HCT116 (cell line): ENCODE measurements at regions of chr14 and their contacts with region 1.

Region 1: DNA sequence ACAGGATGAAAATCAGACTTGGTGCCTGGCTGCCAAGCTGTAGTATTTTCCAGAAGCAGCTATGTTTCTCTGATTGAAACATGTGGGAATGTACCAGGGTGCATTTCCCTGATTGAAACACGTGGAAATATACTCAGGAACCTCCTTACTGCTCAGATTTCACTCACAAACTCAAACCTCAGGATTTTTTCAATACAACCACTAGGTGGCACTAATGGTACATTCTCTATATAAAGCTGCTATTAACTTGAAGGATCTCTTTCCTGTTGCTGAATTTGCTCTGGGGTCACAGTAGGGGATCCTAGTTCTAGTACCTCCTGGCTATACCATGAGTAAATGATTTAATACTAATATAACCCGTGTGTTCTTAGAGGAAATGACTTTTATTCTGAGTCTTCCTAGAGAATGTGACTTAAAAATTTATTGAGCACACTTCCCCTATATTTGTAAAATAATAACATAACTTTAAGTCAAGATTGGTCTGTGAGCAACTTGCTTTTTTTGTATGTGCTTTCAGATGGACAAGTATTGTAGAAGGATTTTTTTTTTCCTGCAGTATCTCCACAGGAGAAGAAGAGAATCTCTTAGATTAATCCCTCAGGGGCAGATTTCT is 173.8 kb upstream of the MIS18BP1 start:
- DNase-seq: peak; percentile 62
- ATAC-seq: peak; percentile 78
- H3K4me3 ChIP-seq: no peak overlapping the region
- H3K27ac ChIP-seq: no peak overlapping the region
- H3K4me1 ChIP-seq: no peaks in the 10 kb centered on the region
- H3K27me3 ChIP-seq: no peaks in the 10 kb centered on the region
- CTCF ChIP-seq: peak; percentile 42 to 73 (median 54); a peak in 5 of 6 replicates
- POLR2A ChIP-seq: no peak
- RAD21 ChIP-seq: peak; percentile 64

Region 2: GRCh38 chr14:45526715-45527549 is 100.2 kb after region 1 on chr14:
- CTCF ChIA-PET with region 1: no interaction called
- POLR2A ChIA-PET with region 1: no interaction called
- RAD21 ChIA-PET with region 1: interaction called in 1 of 2 experiments, 3 read pairs
- intact Hi-C with region 1: loop called (anchors 1 kb)
- DNase-seq: peak; percentile 51
- ATAC-seq: peak; percentile 95
- H3K4me3 ChIP-seq: no peak overlapping the region
- H3K27ac ChIP-seq: peak overlapping the region; percentile 1; the same call in 1 of the 2 replicates
- H3K4me1 ChIP-seq: peaks cover 4 to 11% of the 10 kb centered on the region in 2 experiments; a peak in 3 of 4 replicates
- H3K27me3 ChIP-seq: no peaks in the 10 kb centered on the region
- CTCF ChIP-seq: peak; percentile 36 to 68 (median 64); a peak in 5 of 6 replicates
- POLR2A ChIP-seq: no peak
- RAD21 ChIP-seq: peak; percentile 60

Region 3: GRCh38 chr14:46344327-46344937 is 917.7 kb after region 1 on chr14:
- CTCF ChIA-PET with region 1: no interaction called
- POLR2A ChIA-PET with region 1: no interaction called
- RAD21 ChIA-PET with region 1: no interaction called
- intact Hi-C with region 1: loop called (anchors 10 kb)
- DNase-seq: peak; percentile 3
- ATAC-seq: peak; percentile 85
- H3K4me3 ChIP-seq: no peak overlapping the region
- H3K27ac ChIP-seq: no peak overlapping the region
- H3K4me1 ChIP-seq: no peaks in the 10 kb centered on the region
- H3K27me3 ChIP-seq: no peaks in the 10 kb centered on the region
- CTCF ChIP-seq: peak; percentile 22 to 60 (median 55); a peak in 4 of 6 replicates
- POLR2A ChIP-seq: no peak
- RAD21 ChIP-seq: peak; percentile 46